ENCODE measurements at regions of chr4 and their contacts with region 1.

Region 1: DNA sequence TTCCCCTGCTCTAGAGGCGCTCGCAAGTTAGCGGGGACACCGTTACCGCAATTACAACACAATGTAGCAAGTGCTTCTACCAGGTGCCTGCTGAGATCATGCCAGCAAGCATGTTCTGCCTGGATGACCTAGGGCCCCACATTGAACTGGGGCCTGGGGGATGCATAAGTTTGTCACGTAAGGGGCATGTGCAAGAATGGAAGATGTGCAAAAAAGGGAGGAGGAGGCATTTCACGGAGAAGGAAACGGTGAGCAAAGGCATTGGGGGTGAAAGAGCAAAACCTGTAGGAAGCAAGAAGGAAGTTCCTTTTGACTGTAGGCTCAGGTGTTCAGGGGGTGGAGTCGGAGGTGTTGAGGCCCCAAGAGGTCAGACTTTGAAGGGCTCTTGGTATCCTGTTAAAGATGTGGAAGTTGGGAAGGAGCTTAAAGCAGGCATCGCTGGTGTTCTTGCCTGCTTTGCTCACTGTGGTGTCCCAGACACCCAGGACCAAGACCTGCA is 602 bp upstream of the SCARB2 start:
- DNase-seq: peak in 1 of 3 donors; percentile 79
- H3K4me3 ChIP-seq: peak overlapping the region; percentile 73 to 94 (median 83)
- H3K27ac ChIP-seq: peak overlapping the region; percentile 78 to 88
- H3K4me1 ChIP-seq: peaks cover 23 to 63% (median 47%) of the 10 kb centered on the region in 4 experiments
- H3K27me3 ChIP-seq: no peaks in the 10 kb centered on the region

Region 2: GRCh38 chr4:76125816-76126215 is 88.4 kb before region 1 on chr4:
- CTCF ChIA-PET with region 1: no interaction called
- POLR2A ChIA-PET with region 1: no interaction called
- DNase-seq: no peak
- H3K4me3 ChIP-seq: no peak overlapping the region
- H3K27ac ChIP-seq: no peak overlapping the region
- H3K4me1 ChIP-seq: no peaks in the 10 kb centered on the region
- H3K27me3 ChIP-seq: no peaks in the 10 kb centered on the region

Region 3: DNA sequence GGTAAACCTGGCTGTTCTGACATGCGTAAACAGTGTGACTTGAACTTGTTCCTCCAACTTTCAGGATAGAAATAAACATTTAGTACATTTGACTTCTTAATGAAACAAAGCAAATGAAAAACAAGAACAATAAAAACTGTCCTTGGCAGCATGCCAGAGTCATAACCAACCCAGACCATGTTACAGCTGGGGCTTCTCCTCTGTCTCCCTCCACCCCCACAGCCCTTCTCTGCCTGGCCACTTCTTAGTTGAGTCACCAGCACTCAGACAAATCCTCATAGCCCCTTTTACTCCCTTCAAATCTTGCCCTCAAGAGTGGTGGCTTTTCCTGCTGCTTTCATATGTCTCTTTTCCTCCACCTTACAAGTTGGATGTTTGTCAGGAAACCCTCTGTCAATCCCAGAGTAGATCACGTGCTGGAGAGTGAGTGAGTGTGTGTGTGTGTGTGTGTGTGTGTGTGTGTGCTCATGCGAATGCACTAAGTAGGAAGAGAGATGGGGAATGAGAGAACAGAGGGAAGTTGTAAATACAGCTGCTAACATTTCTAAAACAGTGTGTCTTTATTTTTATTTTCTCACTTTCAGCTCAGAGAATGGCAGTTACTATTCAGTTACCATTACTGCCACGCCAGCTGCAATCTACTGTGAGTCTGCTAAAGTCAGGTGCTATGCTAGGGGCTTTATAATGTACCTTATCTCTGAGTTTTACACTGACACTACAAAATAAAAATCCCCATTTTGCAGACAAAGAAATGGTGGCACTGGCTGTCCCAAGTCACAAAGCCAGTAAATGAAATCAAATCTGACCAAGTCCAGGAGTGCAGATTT is 15.6 kb before region 1 on chr4:
- CTCF ChIA-PET with region 1: interaction called, 17 read pairs
- POLR2A ChIA-PET with region 1: interaction called, 8 read pairs
- DNase-seq: peak; percentile 82 to 96 (median 95)
- H3K4me3 ChIP-seq: peak overlapping the region in 4 of 7 experiments; percentile 28 to 53 (median 30)
- H3K27ac ChIP-seq: peak overlapping the region; percentile 47 to 73
- H3K4me1 ChIP-seq: peaks cover 31 to 58% (median 50%) of the 10 kb centered on the region in 4 experiments
- H3K27me3 ChIP-seq: no peaks in the 10 kb centered on the region